ENCODE measurements at regions of chr14 and their contacts with region 1.

Region 1: DNA sequence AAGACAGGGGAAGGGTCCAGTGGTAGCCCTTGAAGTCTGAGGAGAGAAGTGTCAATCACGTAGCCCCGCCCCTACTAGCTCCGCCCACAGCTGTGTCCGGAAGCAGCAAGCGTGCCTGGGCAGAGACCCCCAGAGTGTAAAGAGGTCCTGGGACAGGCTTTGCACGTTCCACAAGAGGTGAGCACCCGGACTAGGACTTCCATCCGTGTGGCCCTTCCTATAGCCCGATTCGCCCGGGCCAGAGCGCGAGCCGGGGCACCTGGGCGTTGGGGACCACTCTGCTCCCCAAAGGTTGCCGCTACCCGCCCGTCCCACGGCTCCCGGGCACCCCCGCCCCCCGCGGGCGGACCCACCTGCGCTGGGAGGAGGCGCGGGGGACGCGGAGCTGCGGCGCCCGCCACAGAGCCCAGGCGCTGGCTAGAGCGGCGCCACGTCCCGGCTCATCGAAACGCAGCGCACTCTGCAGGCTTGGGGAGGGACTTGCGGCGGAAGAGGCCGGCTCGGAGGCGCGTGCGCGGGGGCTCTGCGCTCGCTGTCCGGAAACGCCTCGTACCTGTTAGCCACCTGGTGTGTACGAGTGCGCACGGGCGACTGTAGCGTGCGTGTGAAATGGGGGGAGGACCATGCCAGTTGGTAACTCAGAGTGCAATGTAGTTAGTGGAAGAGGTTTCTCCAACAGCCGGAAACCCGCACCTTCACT is at the start of gene RABGGTA:
- DNase-seq: peak; percentile 94

Region 2: DNA sequence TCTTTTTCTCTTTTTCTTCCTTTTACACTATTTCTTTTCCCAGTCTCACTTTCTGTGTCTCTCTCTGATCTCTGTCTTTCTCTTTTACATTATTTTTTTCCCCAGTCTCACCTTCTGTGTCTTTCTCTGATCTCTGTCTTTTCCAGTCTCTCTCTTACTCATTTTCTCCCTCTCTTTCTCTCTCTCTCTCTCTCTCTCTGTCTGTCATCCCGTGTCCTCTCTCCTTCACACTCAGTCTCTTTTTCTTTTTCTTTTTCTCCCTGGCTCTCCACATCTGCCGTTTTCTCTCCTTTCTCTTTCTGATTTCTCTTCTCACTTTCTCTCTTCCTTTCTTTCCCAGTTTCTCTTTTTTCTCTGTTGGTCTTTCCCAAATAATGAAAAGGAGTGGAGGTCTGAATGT is 260.2 kb before region 1 on chr14:
- CTCF ChIA-PET with region 1: no interaction called
- POLR2A ChIA-PET with region 1: no interaction called
- DNase-seq: no peak

Region 3: DNA sequence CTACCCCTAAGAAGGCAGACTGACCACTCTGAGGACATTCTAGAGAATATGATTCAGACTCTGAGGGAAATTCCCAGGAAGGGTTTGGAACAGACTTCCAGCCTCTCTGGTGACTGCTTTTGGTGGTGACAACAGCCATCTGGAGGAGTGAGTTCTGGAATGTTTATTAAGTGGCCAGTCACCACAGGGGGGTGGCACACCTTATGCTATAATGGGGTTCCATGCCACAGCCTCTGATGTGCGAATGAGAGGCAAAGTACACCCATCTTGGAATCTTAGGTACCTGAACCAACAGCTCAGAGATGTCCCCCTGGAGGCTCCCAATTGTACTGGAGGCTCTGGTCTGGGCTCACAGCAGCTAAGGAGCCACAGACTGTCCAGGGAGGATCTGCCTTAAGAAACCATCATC is 19.4 kb before region 1 on chr14:
- CTCF ChIA-PET with region 1: interaction called, 3 read pairs
- POLR2A ChIA-PET with region 1: interaction called, 23 read pairs
- DNase-seq: no peak

Region 4: GRCh38 chr14:24259252-24259995 is 11.9 kb before region 1 on chr14:
- CTCF ChIA-PET with region 1: interaction called, 6 read pairs
- POLR2A ChIA-PET with region 1: interaction called, 30 read pairs
- DNase-seq: no peak

Region 5: GRCh38 chr14:24292118-24292807 is 21.0 kb after region 1 on chr14:
- CTCF ChIA-PET with region 1: interaction called, 6 read pairs
- POLR2A ChIA-PET with region 1: interaction called, 13 read pairs
- DNase-seq: no peak

Region 6: GRCh38 chr14:24299255-24300195 is 28.2 kb after region 1 on chr14 and contains the starts of genes DHRS1 and NOP9:
- CTCF ChIA-PET with region 1: interaction called, 5 read pairs
- POLR2A ChIA-PET with region 1: interaction called, 14 read pairs
- DNase-seq: peak; percentile 95

Region 7: GRCh38 chr14:24307575-24308341 is 36.5 kb after region 1 on chr14 and contains the start of gene CIDEB:
- CTCF ChIA-PET with region 1: interaction called, 3 read pairs
- POLR2A ChIA-PET with region 1: interaction called, 12 read pairs
- DNase-seq: peak; percentile 78

Region 8: DNA sequence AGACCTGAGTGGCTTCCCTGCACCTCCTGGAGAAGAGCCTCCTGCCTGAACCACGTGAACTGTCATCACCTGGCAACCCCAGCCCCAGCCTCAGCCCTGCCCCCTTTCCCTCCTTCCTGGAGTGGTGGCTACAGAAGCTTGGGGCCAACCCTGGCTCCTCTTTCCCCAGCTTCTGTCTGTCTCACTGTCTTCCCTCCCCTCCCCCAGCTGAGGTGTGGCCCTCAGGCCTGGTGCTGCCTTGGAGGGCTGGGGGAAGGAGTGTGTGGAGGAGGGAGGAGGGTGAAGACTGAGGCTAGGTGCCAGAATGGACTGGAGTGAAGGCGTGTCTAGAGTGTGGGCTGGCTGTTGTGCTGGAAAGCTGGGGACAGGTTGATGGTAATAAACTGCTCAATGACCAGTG is 106.4 kb after region 1 on chr14:
- CTCF ChIA-PET with region 1: no interaction called
- POLR2A ChIA-PET with region 1: no interaction called
- DNase-seq: no peak

Measured in HEK293T (cell line).